Psoas muscle (tissue), 8 donors: ENCODE measurements at regions of chr1 and their contacts with region 1.

Region 1: GRCh38 chr1:46132529-46133180 is at the start of gene PIK3R3:
- DNase-seq: peak; percentile 98 to 99
- ATAC-seq: peak; percentile 94 to 99 (median 96)
- H3K4me3 ChIP-seq: peak within 1 kb of the TSS; percentile 80
- H3K27ac ChIP-seq: peak within 1 kb of the TSS; percentile 96
- H3K4me1 ChIP-seq: peaks cover 36% of the 10 kb centered on the region
- H3K27me3 ChIP-seq: peaks cover 0 to 4% (median 0%) of the 10 kb centered on the region in 3 donors
- CTCF ChIP-seq: no peak
- total RNA-seq, gene PIK3R3: 17.3 to 24.2 (median 21.2) TPM

Region 2: DNA sequence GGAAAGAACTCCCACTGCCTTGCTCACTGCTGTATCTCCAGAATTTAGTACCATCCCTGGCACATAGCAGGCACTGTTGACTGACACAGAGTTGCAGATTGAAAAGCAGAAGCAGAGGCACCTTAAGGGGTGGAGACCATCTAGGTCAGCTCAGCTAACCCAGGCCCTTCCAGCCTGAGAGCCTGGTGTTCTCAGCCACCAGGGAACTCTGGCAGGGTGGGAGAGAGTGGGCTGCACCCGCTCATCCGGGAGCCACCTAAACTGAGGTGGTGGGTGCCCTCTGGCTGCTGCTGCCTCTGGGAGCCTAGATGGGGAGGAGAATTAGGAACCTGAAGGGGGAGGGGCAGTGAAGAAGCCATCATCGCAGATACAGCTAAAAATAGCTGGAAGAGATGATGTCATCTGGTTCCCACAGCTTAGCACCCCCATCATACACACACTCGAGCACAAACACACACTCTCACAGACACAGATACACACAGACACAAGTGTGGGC is 40.8 kb after region 1 on chr1:
- intact Hi-C with region 1: loop called (anchors 2 kb)
- DNase-seq: no peak
- ATAC-seq: peak; percentile 40 to 74 (median 58)
- H3K4me3 ChIP-seq: no peak overlapping the region
- H3K27ac ChIP-seq: peak overlapping the region; percentile 47
- H3K4me1 ChIP-seq: peaks cover 33% of the 10 kb centered on the region
- H3K27me3 ChIP-seq: no peaks in the 10 kb centered on the region
- CTCF ChIP-seq: no peak